GM10248 (cell line): ENCODE measurements at regions of chr14 and their contacts with region 1.

Region 1: DNA sequence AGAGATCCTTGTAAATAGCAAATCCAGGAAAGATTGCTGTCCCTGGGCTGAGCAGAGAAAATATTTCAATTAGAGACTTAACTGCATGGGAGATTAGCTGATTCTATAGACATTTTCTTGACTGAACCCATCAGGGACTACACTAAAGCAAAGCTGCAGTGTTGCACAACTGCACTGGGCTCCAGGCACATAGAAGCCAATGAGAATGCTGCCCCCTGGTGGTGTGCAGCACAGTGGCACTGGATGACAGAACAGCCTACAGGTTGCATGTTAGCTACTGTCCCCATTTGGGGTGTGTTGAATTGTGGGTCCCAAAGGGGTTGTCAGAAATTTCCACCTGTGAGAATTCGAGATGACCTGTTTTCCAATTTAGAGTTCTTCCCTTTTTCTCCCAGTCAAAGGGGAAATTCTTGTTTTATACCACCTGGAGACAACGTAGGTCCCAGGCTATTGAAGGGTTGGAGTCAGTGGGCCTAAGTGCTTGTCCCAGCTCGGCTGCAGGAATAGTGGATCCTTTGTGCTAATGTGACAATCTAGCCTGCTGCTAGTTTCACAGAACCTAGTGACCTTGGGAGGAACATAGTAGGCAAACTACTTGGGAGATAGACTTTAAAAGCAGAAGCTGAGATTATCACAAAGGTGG is 114.7 kb downstream of the SLC8A3 start:
- DNase-seq: peak; percentile 70
- CTCF ChIP-seq: peak; percentile 85

Region 2: GRCh38 chr14:69685716-69686115 is 388.3 kb before region 1 on chr14:
- CTCF ChIA-PET with region 1: no interaction called
- POLR2A ChIA-PET with region 1: no interaction called
- DNase-seq: no peak
- CTCF ChIP-seq: no peak

Region 3: DNA sequence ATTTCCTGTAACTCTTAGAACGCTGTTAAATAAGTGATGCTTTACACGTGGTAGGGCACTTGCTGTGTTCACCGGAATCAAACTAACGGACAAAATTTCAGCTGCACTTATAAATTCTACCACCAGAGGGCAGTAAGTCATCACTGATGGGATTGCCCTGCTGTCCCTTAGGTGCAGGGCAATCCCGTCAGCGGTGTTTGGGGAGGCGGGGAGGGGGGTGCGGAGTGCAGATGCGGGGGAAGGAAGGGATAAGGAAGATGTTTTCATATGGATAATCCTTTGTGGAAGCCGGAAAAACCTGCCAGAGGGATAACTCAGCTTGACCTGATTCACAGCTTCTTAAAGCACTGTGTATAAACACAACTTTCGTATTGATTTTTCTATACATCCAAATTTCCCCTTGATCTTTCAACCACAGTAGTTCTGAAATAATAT is 255.3 kb before region 1 on chr14:
- CTCF ChIA-PET with region 1: interaction called, 15 read pairs
- POLR2A ChIA-PET with region 1: no interaction called
- DNase-seq: peak; percentile 74
- CTCF ChIP-seq: peak; percentile 87

Region 4: GRCh38 chr14:70086685-70087379 is 12.8 kb after region 1 on chr14:
- CTCF ChIA-PET with region 1: interaction called, 14 read pairs
- POLR2A ChIA-PET with region 1: no interaction called
- DNase-seq: peak; percentile 26
- CTCF ChIP-seq: peak; percentile 43